Heart left ventricle (tissue), 16 donors: ENCODE measurements at regions of chr1 and their contacts with region 1.

Region 1: DNA sequence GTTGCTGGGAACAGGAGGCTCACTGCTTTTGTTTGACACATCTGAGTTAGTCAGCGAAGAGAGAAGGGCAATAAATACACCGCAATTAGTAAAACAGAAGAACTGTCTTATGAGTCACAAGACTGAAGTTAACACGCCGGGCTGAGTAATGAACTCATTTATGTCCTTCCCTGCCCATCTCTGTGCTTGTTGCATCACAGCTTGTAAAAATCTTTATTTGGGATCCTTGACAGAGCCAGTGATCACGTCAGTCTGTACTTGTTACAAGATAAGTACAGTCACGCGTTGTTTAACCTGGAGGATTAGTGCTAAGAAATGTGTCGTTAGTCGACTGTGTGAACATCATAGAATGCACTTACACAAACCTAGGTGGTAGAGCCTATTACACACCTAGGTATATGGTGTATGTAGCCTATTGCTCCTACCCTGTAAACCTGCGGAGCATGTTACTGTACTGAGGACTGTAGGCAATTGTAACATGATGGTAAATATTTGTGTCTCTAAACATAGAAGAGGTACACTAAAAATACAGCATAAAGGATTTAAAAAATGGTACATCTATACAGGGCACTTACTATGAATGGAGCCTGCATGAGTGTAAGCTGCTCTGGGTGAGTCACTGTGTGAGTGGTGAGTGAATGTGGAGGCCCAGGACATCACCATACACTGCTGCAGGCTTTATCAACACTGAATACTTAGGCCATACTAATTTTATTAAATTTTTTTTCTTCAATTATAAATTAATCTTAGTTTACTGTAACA is 272.2 kb downstream of the TNR start:
- DNase-seq: no peak
- ATAC-seq: peak in 2 of 4 donors; percentile 22 to 51
- H3K4me3 ChIP-seq: no peak overlapping the region
- H3K27ac ChIP-seq: no peak overlapping the region
- H3K4me1 ChIP-seq: no peaks in the 10 kb centered on the region
- H3K27me3 ChIP-seq: peaks cover 0 to 8% (median 0%) of the 10 kb centered on the region in 9 donors
- CTCF ChIP-seq: no peak
- POLR2A ChIP-seq: no peak

Region 2: DNA sequence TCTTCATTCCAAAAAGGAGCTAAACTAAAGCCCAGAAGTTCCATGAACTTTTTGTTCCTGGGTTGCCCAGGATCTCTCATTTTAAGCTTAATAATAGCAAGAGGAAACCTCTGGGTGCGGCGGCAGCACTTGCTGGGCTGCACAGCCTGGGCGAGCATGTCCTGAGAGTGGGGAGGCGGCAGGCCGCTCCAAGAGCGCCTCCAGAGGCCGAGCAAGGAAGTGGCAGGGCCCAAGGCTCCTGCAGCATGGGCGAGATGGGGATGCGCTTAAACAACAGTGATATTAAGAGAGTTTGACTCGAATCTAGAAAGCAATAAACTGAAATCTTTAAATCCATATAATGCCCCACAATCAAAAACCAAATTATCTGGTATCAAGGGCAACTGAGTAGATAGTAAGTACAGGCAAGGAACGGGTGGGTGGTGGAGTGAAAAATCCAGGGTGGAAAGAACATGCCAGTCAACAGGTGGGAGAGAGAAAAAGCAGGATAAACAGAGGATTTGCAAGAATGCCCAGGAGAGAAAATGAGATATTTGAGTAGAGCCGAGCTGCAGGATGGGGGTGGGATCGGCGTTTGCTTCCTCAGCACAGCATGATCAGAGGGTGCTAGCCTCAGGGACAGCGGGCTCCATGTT is 286.3 kb after region 1 on chr1:
- intact Hi-C with region 1: loop called in 1 of 10 experiments (anchors 10 kb)
- DNase-seq: no peak
- ATAC-seq: peak in 3 of 4 donors; percentile 50 to 71 (median 57)
- H3K4me3 ChIP-seq: no peak overlapping the region
- H3K27ac ChIP-seq: no peak overlapping the region
- H3K4me1 ChIP-seq: no peaks in the 10 kb centered on the region
- H3K27me3 ChIP-seq: no peaks in the 10 kb centered on the region
- CTCF ChIP-seq: peak; percentile 46 to 77 (median 57)
- POLR2A ChIP-seq: no peak